Calu3 (cell line): ENCODE measurements at regions of chr1 and their contacts with region 1.

Region 1: GRCh38 chr1:23854568-23854967 is 13.5 kb downstream of the FUCA1 start:
- DNase-seq: peak; percentile 4
- H3K4me3 Mint-ChIP-seq: no peak overlapping the region
- H3K27ac Mint-ChIP-seq: no peak overlapping the region
- H3K4me1 Mint-ChIP-seq: no peaks in the 10 kb centered on the region
- H3K27me3 Mint-ChIP-seq: no peaks in the 10 kb centered on the region
- CTCF ChIP-seq: no peak

Region 2: GRCh38 chr1:23772049-23772853 is 82.3 kb before region 1 on chr1:
- CTCF ChIA-PET with region 1: no interaction called
- intact Hi-C with region 1: loop called (anchors 2 kb)
- DNase-seq: peak; percentile 84
- H3K4me3 Mint-ChIP-seq: no peak overlapping the region
- H3K27ac Mint-ChIP-seq: no peak overlapping the region
- H3K4me1 Mint-ChIP-seq: peaks cover 8% of the 10 kb centered on the region
- H3K27me3 Mint-ChIP-seq: no peaks in the 10 kb centered on the region
- CTCF ChIP-seq: peak; percentile 80

Region 3: DNA sequence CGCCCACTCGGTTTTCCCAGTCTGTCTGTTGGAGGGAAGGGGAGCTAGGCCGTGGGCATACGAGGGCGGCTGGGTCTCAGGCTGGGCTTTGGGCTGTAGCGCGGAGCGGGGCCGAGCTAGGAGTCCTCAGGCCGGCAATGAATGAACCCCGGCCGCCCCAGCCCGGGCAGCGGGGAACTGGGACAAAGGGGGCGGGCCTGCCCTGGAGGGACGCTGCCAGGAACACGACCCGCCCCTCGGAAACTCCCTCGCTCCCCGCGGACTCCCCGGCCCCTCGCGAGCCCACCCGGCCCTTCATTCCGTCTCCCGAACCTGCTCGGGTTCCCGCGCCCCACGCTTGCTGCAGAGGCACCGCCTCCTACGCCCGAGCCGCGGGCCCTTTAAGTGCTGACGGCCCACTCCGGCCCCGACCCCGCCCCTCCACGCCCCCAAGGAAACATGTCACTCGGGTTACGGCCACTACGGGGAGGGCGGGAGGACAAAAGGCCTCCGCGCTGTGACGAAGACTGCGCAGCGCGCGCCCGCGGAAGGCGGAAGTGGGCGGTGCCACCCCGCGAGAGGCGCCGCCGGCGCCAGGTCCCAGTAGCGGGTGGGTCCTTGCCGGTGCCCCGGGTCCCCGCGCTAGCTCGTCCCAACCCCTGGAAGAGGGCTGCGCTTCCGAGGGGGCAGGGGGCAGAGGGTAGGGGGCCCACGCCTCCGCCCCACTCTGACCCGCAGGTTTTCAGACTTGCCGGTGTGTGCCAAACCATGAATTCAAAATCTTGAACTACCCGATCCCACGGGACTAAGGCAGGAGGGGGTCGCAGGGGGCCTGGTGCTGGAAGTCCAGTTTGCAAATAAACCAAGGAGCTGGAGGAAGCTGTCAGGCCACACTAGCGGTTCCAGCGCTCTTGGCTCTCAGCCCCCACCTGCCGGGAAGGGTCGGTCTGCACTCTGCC is 53.9 kb before region 1 on chr1 and contains the start of gene GALE:
- CTCF ChIA-PET with region 1: no interaction called
- intact Hi-C with region 1: no loop called
- DNase-seq: peak; percentile 90
- H3K4me3 Mint-ChIP-seq: peak within 1 kb of the TSS; percentile 83
- H3K27ac Mint-ChIP-seq: peak within 1 kb of the TSS; percentile 93
- H3K4me1 Mint-ChIP-seq: no peaks in the 10 kb centered on the region
- H3K27me3 Mint-ChIP-seq: no peaks in the 10 kb centered on the region
- CTCF ChIP-seq: no peak
- total RNA-seq, gene GALE: 76.7 and 97.9 TPM in 2 replicates

Region 4: GRCh38 chr1:23878668-23879067 is 24.1 kb after region 1 on chr1:
- CTCF ChIA-PET with region 1: no interaction called
- intact Hi-C with region 1: no loop called
- DNase-seq: no peak
- H3K4me3 Mint-ChIP-seq: no peak overlapping the region
- H3K27ac Mint-ChIP-seq: no peak overlapping the region
- H3K4me1 Mint-ChIP-seq: no peaks in the 10 kb centered on the region
- H3K27me3 Mint-ChIP-seq: peaks cover 13% of the 10 kb centered on the region
- CTCF ChIP-seq: no peak